GM13976 (cell line): ENCODE measurements at regions of chr18 and their contacts with region 1.

Region 1: GRCh38 chr18:51110073-51110803 is 80.2 kb downstream of the SMAD4 start:
- DNase-seq: peak; percentile 92
- CTCF ChIP-seq: peak; percentile 93

Region 2: GRCh38 chr18:50559752-50560680 is 550.2 kb before region 1 on chr18 and contains the start of gene MAPK4:
- in situ Hi-C with region 1: no loop called
- DNase-seq: peak; percentile 73
- CTCF ChIP-seq: no peak

Region 3: DNA sequence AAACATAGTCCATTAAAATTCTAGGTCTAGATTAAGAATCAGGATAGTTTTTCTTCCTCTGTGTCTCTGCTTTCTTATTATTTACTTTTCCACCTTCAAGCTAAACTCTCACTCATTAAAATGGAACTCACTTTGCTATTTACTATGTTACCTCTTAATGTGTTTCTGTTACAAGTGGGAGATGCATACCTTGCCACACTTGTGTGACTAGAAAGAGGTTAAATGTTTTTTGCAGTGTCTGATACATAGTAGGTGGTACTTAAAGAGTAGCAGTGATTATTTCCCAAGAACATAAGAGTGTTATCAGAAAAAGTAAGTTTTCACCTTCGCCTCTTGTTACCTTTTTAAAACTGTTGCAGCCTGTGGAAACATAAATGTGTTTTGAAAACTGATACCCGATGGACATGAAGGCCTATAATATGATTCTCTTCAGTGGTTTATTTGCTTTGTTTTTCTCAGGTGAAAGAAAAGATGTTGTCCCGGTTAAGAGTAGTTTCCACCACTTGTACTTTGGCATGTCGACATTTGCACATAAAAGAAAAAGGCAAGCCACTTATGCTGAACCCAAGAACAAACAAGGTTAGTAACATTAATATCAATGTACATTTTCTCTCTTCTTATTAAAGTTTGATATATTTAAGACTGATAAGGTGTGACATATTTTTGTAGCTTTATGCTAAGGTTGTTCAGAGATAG is 214.7 kb before region 1 on chr18:
- in situ Hi-C with region 1: no loop called
- DNase-seq: no peak
- CTCF ChIP-seq: no peak

Region 4: DNA sequence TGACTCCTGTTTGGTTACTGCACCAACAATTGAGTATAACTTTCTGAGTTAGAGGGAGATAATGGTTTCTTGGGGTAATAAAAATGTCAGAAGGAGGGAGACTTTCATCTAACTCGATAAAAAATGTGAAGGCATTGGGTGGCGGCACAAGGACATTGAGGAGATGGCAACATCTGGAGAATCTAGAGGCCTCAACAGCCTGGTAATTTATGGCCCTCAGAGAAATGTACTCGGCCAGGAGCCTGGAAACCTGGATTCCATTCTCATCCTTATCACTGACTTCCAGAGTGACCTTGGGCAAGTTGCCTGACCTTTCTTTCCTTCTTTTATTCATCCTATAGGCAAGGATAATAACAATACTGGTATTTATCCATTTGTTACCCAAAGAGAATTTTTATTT is 260.8 kb after region 1 on chr18:
- in situ Hi-C with region 1: loop called (anchors 10 kb)
- DNase-seq: no peak
- CTCF ChIP-seq: no peak

Region 5: DNA sequence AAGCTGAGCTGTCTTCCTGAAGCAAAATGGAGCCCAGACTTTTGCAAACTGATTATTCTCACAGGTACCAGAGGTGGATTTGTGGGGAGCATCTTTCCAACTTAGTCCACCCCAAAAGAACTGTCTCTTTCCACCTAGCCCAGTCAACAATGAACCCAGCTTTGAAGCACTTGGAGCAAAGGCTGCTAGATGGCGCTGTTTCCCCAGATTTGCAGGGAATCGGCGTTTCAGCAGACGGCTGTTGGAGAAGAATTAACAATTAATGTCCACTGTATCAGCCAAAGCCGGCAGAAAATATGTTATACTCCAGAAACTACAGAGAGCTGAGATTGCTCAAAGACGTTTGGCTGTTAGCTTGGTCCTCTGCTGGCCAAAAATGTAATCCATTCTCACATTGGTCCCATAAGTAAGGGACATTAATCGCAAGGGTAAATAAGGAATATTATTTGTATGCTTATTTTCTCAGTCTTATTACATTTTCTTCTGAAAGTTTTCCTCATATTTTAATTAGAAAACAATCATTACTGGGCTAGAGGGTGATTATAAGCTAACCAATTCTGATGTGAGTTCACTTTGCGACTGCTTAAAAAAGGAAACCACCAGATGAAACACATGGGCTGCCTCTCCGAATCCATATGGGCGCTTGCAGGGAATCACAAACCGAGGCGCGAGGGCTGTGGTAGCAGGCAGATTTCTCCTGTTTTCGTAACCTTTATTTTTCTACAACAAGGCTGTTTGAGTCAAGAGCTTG is 511.1 kb after region 1 on chr18:
- in situ Hi-C with region 1: loop called (anchors 25 kb)
- DNase-seq: peak; percentile 56
- CTCF ChIP-seq: peak; percentile 77